CD8-positive, alpha-beta T cell (primary cell): ENCODE measurements at regions of chr3 and their contacts with region 1.

Region 1: DNA sequence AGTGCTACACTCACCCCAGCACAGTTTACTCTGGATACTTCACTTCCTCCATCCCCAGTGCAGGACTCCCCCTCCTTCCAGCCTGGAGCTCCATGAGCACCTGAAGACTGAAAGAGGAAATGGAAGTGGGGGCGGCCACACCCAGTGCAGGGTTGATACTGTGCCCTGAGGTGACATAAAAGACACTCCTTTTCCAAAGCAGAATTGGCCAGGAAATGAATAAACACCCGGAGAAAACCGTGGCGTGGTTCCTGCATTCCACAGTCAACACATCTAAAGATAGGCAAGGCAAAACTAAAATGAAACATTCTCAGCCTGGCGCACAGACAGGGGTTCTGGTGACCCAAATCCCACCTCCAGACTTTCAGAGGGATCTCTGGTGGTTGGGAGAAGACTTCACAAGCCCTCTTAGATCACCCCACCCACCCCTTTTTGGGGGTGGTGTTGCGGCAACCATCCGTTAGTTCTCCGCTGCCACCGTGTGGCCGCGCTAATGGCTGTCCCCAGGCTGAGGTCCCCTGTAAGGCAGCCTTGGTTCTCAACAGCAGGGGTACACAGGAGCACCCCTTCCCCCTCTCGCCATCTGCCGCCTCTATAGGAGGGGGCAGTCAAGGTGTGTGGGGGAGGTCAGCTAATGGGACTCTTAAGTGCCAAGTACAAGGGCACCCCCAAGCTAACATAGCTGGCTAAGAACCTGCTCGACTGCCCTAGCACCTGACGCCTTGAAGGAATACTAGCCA is 2.5 kb upstream of the MST1R start:
- DNase-seq: peak; percentile 10 to 69 (median 48)
- ATAC-seq: peak; percentile 43
- H3K4me3 ChIP-seq: no peak overlapping the region
- H3K4me3 Mint-ChIP-seq: peak overlapping the region; percentile 37
- H3K27ac ChIP-seq: no peak overlapping the region
- H3K27ac Mint-ChIP-seq: peak overlapping the region; percentile 37
- H3K4me1 ChIP-seq: peaks cover 22% of the 10 kb centered on the region
- H3K4me1 Mint-ChIP-seq: peaks cover 29% of the 10 kb centered on the region
- H3K27me3 ChIP-seq: no peaks in the 10 kb centered on the region
- H3K27me3 Mint-ChIP-seq: no peaks in the 10 kb centered on the region
- CTCF ChIP-seq: peak; percentile 54

Region 2: DNA sequence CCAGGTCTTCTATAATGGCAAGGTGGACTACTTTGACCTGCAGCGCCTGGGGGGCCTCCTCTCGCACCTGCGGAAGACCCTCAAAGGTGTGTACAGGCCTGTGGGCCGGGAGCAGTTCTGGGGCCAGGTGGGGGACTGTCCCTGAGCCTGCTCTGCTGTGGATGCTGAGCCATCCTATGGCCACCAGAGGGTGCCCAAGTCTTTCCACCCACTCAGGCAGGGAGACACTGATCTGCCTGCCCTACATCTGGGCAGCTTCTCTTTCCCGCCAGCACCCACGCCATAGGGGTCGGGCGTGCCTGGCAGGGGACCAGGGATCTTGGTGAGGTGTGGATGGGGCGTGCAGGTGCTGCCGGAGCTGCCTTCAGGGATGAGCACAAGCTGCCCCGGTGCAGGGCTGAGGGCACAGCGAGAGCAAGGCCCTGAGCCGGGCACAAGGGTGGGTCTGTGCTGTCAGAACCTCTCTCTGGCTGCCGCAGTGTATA is 202.7 kb before region 1 on chr3:
- CTCF ChIA-PET with region 1: no interaction called
- POLR2A ChIA-PET with region 1: no interaction called
- intact Hi-C with region 1: loop called (anchors 1 to 2 kb)
- DNase-seq: peak; percentile 39 to 81 (median 67)
- ATAC-seq: peak; percentile 100
- H3K4me3 ChIP-seq: no peak overlapping the region
- H3K4me3 Mint-ChIP-seq: no peak overlapping the region
- H3K27ac ChIP-seq: no peak overlapping the region
- H3K27ac Mint-ChIP-seq: no peak overlapping the region
- H3K4me1 ChIP-seq: no peaks in the 10 kb centered on the region
- H3K4me1 Mint-ChIP-seq: no peaks in the 10 kb centered on the region
- H3K27me3 ChIP-seq: no peaks in the 10 kb centered on the region
- H3K27me3 Mint-ChIP-seq: no peaks in the 10 kb centered on the region
- CTCF ChIP-seq: peak; percentile 74

Region 3: DNA sequence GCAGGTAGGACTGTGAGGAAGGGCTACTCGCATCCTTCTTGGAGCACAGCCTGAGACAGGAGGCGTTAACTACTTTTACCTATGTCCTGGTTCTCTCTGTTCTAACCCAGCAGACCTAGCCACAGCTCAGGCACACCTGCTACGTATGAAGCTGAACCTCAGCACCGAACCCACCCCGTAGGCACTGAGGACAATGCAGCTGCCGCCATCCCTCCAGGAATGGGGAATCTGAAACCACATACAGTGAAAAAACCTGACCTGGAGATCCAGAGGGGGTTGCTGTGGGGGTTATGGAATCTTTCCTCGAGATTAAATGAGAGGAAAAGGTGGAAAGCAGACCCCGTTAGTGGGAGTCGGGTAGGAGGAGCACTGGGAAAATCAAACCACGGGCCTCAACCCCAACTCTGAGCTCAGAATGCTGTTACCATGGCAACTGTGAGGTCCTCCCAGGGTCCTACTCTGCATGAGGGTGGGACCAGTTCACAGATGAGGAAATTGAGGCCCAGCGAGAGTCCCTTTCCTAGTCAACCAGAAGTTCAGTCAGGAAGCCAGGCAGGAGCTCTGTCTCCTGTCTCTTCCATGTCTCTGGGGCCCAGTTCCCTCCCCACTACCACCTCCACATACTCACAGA is 16.8 kb before region 1 on chr3:
- CTCF ChIA-PET with region 1: no interaction called
- POLR2A ChIA-PET with region 1: no interaction called
- intact Hi-C with region 1: no loop called
- DNase-seq: no peak
- ATAC-seq: no peak
- H3K4me3 ChIP-seq: no peak overlapping the region
- H3K4me3 Mint-ChIP-seq: no peak overlapping the region
- H3K27ac ChIP-seq: no peak overlapping the region
- H3K27ac Mint-ChIP-seq: no peak overlapping the region
- H3K4me1 ChIP-seq: no peaks in the 10 kb centered on the region
- H3K4me1 Mint-ChIP-seq: no peaks in the 10 kb centered on the region
- H3K27me3 ChIP-seq: no peaks in the 10 kb centered on the region
- H3K27me3 Mint-ChIP-seq: no peaks in the 10 kb centered on the region
- CTCF ChIP-seq: no peak

Region 4: GRCh38 chr3:50509715-50510114 is 603.5 kb after region 1 on chr3:
- CTCF ChIA-PET with region 1: no interaction called
- POLR2A ChIA-PET with region 1: no interaction called
- intact Hi-C with region 1: no loop called
- DNase-seq: no peak
- ATAC-seq: no peak
- H3K4me3 ChIP-seq: no peak overlapping the region
- H3K4me3 Mint-ChIP-seq: no peak overlapping the region
- H3K27ac ChIP-seq: no peak overlapping the region
- H3K27ac Mint-ChIP-seq: no peak overlapping the region
- H3K4me1 ChIP-seq: no peaks in the 10 kb centered on the region
- H3K4me1 Mint-ChIP-seq: no peaks in the 10 kb centered on the region
- H3K27me3 ChIP-seq: no peaks in the 10 kb centered on the region
- H3K27me3 Mint-ChIP-seq: no peaks in the 10 kb centered on the region
- CTCF ChIP-seq: no peak